Posterior cingulate gyrus (tissue), 11 donors: ENCODE measurements at regions of chr6 and their contacts with region 1.

Region 1: GRCh38 chr6:29847871-29848630 is 20.4 kb downstream of the HLA-G start:
- DNase-seq: peak; percentile 47 to 97 (median 82)

Region 2: DNA sequence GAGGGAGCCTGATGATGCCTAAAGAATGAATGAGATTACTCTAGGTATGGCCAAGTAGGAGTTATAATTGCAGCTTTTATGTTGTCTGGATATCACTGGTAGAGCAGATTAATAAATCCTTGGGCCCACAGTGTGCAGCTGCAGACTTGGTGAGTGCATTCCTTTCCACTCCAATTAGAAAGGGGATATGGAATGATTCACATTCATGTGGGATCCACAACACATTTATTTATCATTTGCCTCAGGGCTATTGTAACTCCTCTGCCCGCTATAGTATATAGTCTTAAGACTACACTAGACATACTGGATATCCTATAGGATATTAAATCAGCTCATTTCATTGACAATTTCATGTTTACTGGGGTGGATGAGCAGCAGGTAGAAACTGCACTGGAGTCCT is 32.0 kb before region 1 on chr6:
- intact Hi-C with region 1: no loop called
- DNase-seq: no peak

Region 3: GRCh38 chr6:30013291-30013922 is 165.4 kb after region 1 on chr6:
- intact Hi-C with region 1: loop called (anchors 1 kb)
- DNase-seq: peak in 1 of 10 donors; percentile 37

Region 4: GRCh38 chr6:30169658-30170614 is 321.9 kb after region 1 on chr6:
- intact Hi-C with region 1: loop called (anchors 10 kb)
- DNase-seq: no peak